ENCODE measurements at regions of chr22 and their contacts with region 1.

Region 1: DNA sequence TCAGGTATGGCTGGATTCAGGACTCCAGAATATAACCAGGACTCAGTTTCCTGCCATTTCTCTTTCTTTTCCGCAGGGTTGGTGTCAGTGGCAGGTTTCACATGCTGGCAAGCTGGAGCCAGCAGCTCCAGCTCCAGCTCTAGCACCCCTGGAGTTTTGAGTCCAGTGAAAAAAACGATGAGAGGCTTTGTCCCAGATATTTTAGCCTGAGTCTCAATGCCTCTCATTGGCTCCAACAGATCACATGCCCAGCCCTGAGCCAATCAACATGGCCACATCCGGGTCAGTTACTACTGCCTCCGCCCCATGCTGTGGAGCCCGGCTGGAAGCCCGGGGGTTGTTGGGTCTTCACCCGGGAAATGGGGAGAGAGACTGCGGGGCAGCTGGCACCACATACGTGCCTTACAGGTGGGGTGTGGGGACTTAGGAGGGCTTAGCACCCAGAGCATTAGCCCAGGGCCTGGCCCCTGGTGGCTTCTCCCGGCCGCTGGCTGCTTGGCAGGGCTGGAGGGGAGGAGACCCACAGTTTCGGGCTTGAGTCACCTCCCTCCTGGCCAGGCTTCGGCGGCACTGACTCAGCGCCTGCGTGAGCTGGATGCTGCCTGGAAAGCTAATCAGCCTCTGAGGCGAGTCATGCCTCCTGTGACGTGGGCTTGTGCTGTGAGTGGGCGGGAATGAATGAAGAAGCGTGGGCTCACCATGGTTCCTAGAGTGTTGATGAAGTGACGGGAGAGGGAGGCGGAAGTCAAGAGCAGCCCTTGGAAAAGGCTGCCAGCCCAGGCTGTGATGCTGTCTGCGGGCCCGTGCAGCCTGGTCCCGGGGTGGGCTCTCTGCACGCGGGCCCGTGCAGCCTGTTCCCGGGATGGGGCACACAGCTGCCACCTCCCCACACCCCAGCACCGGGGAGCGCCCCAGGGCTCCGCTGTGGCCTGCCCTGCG is 15.3 kb upstream of the MRTFA start:
- DNase-seq: peak; percentile 97
- H3K4me3 ChIP-seq: peak overlapping the region; percentile 80
- CTCF ChIP-seq: no peak

Region 2: DNA sequence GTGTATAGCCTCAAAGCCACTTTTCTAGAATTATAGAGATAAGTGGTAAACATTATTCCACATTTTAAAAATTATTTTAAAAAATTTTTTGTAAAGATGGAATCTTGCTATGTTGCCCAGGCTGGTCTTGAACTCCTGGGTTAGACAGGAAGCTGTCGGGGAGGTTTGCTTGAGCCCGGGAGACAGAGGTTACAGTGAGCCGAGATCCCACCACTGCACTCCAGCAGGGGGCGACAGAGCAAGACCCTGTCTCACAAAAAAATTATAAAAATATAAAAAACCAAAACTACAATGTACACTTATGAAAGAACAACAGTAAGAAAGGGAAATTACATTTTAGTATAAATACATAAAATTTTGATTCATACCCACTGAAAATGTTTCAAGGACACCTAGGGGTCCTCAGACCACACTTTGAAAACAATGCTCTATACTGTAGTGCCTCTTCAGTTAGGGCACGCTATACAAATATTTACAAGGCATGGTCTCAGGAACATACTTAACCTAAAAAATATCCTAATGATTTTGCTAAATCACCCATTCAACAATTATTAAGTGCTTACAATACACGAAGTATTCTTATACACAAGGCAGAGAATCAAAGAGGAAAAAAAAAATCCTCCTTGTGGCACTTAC is 126.5 kb before region 1 on chr22:
- CTCF ChIA-PET with region 1: interaction called, 86 read pairs
- POLR2A ChIA-PET with region 1: no interaction called
- DNase-seq: no peak
- H3K4me3 ChIP-seq: no peak overlapping the region
- CTCF ChIP-seq: peak; percentile 59

Region 3: GRCh38 chr22:40540265-40540664 is 111.6 kb before region 1 on chr22:
- CTCF ChIA-PET with region 1: no interaction called
- POLR2A ChIA-PET with region 1: no interaction called
- DNase-seq: no peak
- H3K4me3 ChIP-seq: no peak overlapping the region
- CTCF ChIP-seq: no peak

Region 4: GRCh38 chr22:40666151-40666848 is 14.5 kb after region 1 on chr22:
- CTCF ChIA-PET with region 1: interaction called, 10 read pairs
- POLR2A ChIA-PET with region 1: no interaction called
- DNase-seq: peak; percentile 60
- H3K4me3 ChIP-seq: no peak overlapping the region
- CTCF ChIP-seq: no peak

Region 5: DNA sequence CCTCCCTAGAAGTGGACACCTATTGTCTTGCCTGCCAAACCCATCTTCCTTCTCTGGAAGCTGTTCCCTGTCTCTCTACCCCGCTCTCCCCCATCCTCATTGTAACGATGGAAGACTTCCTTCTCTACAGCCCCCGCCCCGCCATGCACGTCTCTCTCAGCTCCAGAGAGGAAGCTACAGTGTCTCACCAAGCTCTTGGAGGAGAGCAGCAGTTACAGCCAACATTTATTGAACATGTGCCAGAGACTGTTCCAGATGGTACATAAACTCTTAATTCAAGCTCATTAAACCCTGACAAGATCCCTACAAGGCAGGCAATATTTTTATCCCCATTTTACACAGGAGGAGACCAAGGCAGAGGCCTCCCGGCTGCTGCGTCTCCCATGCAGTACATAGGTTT is 42.6 kb after region 1 on chr22:
- CTCF ChIA-PET with region 1: no interaction called
- POLR2A ChIA-PET with region 1: no interaction called
- DNase-seq: no peak
- H3K4me3 ChIP-seq: no peak overlapping the region
- CTCF ChIP-seq: no peak

Region 6: GRCh38 chr22:40732999-40733292 is 81.1 kb after region 1 on chr22:
- CTCF ChIA-PET with region 1: no interaction called
- POLR2A ChIA-PET with region 1: no interaction called
- DNase-seq: no peak
- H3K4me3 ChIP-seq: no peak overlapping the region
- CTCF ChIP-seq: no peak

Region 7: GRCh38 chr22:40757071-40757470 is 105.2 kb after region 1 on chr22:
- CTCF ChIA-PET with region 1: interaction called, 10 read pairs
- POLR2A ChIA-PET with region 1: no interaction called
- DNase-seq: no peak
- H3K4me3 ChIP-seq: no peak overlapping the region
- CTCF ChIP-seq: no peak

Region 8: DNA sequence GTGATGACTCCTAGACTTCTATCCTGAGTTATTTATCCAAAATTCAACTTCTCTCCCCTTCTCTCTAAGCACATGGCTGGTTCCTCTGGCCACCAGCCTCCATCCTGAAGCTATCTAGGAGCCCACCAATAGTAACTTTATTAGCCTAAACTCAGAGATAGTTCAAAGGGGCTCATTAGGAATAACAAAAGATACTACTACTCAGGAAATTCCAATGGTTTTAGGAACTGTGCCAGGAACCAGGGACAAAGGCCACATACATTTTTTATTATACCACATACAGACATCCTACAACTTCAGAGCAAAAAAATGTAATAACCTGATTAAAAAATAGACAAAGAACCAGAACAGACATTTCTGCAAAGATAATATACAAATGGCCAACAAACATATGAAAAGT is 139.4 kb after region 1 on chr22:
- CTCF ChIA-PET with region 1: no interaction called
- POLR2A ChIA-PET with region 1: no interaction called
- DNase-seq: no peak
- H3K4me3 ChIP-seq: no peak overlapping the region
- CTCF ChIP-seq: no peak

Region 9: GRCh38 chr22:40898850-40899357 is 247.1 kb after region 1 on chr22:
- CTCF ChIA-PET with region 1: interaction called, 16 read pairs
- POLR2A ChIA-PET with region 1: no interaction called
- DNase-seq: no peak
- H3K4me3 ChIP-seq: no peak overlapping the region
- CTCF ChIP-seq: peak; percentile 40

Measured in AG04449 (cell line).